ENCODE measurements at regions of chr11 and their contacts with region 1.

Region 1: GRCh38 chr11:117026593-117027330 is 71.5 kb downstream of the SIK3 start:
- DNase-seq: no peak
- ATAC-seq: no peak; the same call in 2 of the 3 replicates
- H3K4me3 ChIP-seq: no peak overlapping the region
- H3K27ac ChIP-seq: no peak overlapping the region
- H3K4me1 ChIP-seq: peaks cover 54% of the 10 kb centered on the region
- H3K27me3 ChIP-seq: no peaks in the 10 kb centered on the region
- CTCF ChIP-seq: no peak
- EP300 ChIP-seq: no peak
- POLR2A ChIP-seq: no peak
- RAD21 ChIP-seq: no peak

Region 2: GRCh38 chr11:116927163-116927974 is 99.4 kb before region 1 on chr11:
- CTCF ChIA-PET with region 1: no interaction called
- POLR2A ChIA-PET with region 1: no interaction called
- in situ Hi-C with region 1: no loop called
- intact Hi-C with region 1: loop called (anchors 10 kb)
- DNase-seq: peak; percentile 13
- ATAC-seq: 0 out of 3 replicates have a peak, but pooled peaks have one; percentile 18
- H3K4me3 ChIP-seq: no peak overlapping the region
- H3K27ac ChIP-seq: no peak overlapping the region
- H3K4me1 ChIP-seq: peaks cover 60% of the 10 kb centered on the region
- H3K27me3 ChIP-seq: no peaks in the 10 kb centered on the region
- CTCF ChIP-seq: peak; percentile 30
- EP300 ChIP-seq: no peak
- POLR2A ChIP-seq: no peak
- RAD21 ChIP-seq: no peak

Region 3: GRCh38 chr11:117010808-117011540 is 15.8 kb before region 1 on chr11:
- CTCF ChIA-PET with region 1: no interaction called
- POLR2A ChIA-PET with region 1: no interaction called
- in situ Hi-C with region 1: no loop called
- intact Hi-C with region 1: no loop called
- DNase-seq: no peak
- ATAC-seq: no peak
- H3K4me3 ChIP-seq: no peak overlapping the region
- H3K27ac ChIP-seq: no peak overlapping the region
- H3K4me1 ChIP-seq: no peaks in the 10 kb centered on the region
- H3K27me3 ChIP-seq: no peaks in the 10 kb centered on the region
- CTCF ChIP-seq: no peak
- EP300 ChIP-seq: no peak
- POLR2A ChIP-seq: no peak
- RAD21 ChIP-seq: no peak

Measured in HepG2 (cell line).